ENCODE measurements at regions of chr2 and their contacts with region 1.

Region 1: GRCh38 chr2:226862623-226863022 is 26.8 kb downstream of the RHBDD1 start:
- DNase-seq: peak; percentile 7
- H3K4me3 ChIP-seq: no peak overlapping the region
- H3K27ac ChIP-seq: no peak overlapping the region
- H3K4me1 ChIP-seq: peaks cover 8% of the 10 kb centered on the region
- CTCF ChIP-seq: no peak

Region 2: GRCh38 chr2:226845386-226846116 is 17.1 kb before region 1 on chr2:
- CTCF ChIA-PET with region 1: no interaction called
- POLR2A ChIA-PET with region 1: interaction called, 14 read pairs
- intact Hi-C with region 1: no loop called
- DNase-seq: no peak
- H3K4me3 ChIP-seq: no peak overlapping the region
- H3K27ac ChIP-seq: no peak overlapping the region
- H3K4me1 ChIP-seq: peaks cover 45% of the 10 kb centered on the region
- CTCF ChIP-seq: no peak

Measured in OCI-LY7 (cell line).